Dendritic cell treated with granulocyte-macrophage colony-stimulating factor and Interleukin-4, amounts not matched to agents 40 ng/mL and 50 ng/mL, for 4 days (primary cell): ENCODE measurements at regions of chr6 and their contacts with region 1.

Region 1: GRCh38 chr6:25490018-25490801 is 161.8 kb upstream of the SCGN start:
- H3K4me3 Mint-ChIP-seq: no peak overlapping the region
- H3K27ac Mint-ChIP-seq: peak overlapping the region; percentile 59
- H3K4me1 Mint-ChIP-seq: peaks cover 25% of the 10 kb centered on the region
- H3K27me3 Mint-ChIP-seq: no peaks in the 10 kb centered on the region

Region 2: GRCh38 chr6:25138237-25139125 is 351.7 kb before region 1 on chr6:
- intact Hi-C with region 1: no loop called
- H3K4me3 Mint-ChIP-seq: peak overlapping the region; percentile 70
- H3K27ac Mint-ChIP-seq: peak overlapping the region; percentile 92
- H3K4me1 Mint-ChIP-seq: peaks cover 45% of the 10 kb centered on the region
- H3K27me3 Mint-ChIP-seq: no peaks in the 10 kb centered on the region

Region 3: DNA sequence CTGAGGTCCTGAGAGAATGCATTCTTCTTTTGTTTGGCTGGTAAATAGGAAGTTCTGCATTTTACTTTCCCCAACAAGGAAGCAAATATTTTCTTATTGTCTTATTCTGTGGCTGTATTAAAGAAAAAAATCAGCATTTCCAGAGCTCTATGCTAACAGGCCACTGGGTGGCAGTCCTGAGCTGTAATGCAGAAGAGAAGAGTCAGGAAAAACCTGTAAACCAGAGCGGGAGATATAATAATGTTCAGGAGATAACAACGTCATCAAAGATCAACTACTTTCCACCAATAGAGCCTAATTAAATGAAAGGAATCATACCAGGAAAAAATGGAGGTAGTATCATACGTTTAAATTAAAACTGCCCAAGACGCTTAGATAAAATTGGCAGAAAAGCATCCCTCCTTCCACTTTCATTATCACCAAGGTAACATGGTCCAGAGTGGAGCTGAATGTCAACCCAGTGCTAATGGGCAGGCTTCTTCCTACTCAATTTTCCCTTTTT is 266.7 kb before region 1 on chr6:
- intact Hi-C with region 1: loop called (anchors 5 kb)
- H3K4me3 Mint-ChIP-seq: no peak overlapping the region
- H3K27ac Mint-ChIP-seq: no peak overlapping the region
- H3K4me1 Mint-ChIP-seq: peaks cover 28% of the 10 kb centered on the region
- H3K27me3 Mint-ChIP-seq: peaks cover 5% of the 10 kb centered on the region

Region 4: GRCh38 chr6:25263657-25264056 is 226.6 kb before region 1 on chr6:
- intact Hi-C with region 1: loop called (anchors 2 kb)
- H3K4me3 Mint-ChIP-seq: no peak overlapping the region
- H3K27ac Mint-ChIP-seq: no peak overlapping the region
- H3K4me1 Mint-ChIP-seq: no peaks in the 10 kb centered on the region
- H3K27me3 Mint-ChIP-seq: peaks cover 4% of the 10 kb centered on the region

Region 5: GRCh38 chr6:25278914-25279747 is 211.1 kb before region 1 on chr6 and contains the start of gene CARMIL1:
- intact Hi-C with region 1: loop called (anchors 5 kb)
- H3K4me3 Mint-ChIP-seq: peak within 1 kb of the TSS; percentile 91
- H3K27ac Mint-ChIP-seq: peak within 1 kb of the TSS; percentile 74
- H3K4me1 Mint-ChIP-seq: peaks cover 39% of the 10 kb centered on the region
- H3K27me3 Mint-ChIP-seq: peaks cover 24% of the 10 kb centered on the region

Region 6: GRCh38 chr6:25435416-25435985 is 54.7 kb before region 1 on chr6:
- intact Hi-C with region 1: loop called (anchors 5 kb)
- H3K4me3 Mint-ChIP-seq: peak overlapping the region; percentile 42
- H3K27ac Mint-ChIP-seq: peak overlapping the region; percentile 67
- H3K4me1 Mint-ChIP-seq: peaks cover 49% of the 10 kb centered on the region
- H3K27me3 Mint-ChIP-seq: no peaks in the 10 kb centered on the region

Region 7: DNA sequence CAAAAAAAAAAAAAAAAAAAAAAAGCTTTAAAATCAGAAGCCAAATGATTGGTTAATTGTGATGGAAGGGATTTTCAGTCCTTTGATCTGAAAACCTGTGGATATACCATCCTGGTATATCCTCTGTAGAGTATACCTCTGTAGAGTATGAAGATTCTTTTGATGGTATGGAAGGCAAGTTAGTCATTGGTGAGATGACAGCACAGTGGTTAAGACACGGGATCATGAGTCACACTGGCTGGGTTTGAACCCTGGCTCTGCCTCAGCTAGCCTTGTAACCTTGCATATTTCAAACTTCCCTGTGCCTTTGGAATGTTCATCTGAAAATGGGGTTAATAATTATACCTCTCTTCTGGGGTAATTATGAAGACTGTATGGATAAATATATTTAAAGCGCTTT is 31.7 kb before region 1 on chr6:
- intact Hi-C with region 1: loop called (anchors 5 kb)
- H3K4me3 Mint-ChIP-seq: no peak overlapping the region
- H3K27ac Mint-ChIP-seq: no peak overlapping the region
- H3K4me1 Mint-ChIP-seq: peaks cover 32% of the 10 kb centered on the region
- H3K27me3 Mint-ChIP-seq: no peaks in the 10 kb centered on the region